Vagina (tissue), 2 donors: ENCODE measurements at regions of chr16 and their contacts with region 1.

Region 1: DNA sequence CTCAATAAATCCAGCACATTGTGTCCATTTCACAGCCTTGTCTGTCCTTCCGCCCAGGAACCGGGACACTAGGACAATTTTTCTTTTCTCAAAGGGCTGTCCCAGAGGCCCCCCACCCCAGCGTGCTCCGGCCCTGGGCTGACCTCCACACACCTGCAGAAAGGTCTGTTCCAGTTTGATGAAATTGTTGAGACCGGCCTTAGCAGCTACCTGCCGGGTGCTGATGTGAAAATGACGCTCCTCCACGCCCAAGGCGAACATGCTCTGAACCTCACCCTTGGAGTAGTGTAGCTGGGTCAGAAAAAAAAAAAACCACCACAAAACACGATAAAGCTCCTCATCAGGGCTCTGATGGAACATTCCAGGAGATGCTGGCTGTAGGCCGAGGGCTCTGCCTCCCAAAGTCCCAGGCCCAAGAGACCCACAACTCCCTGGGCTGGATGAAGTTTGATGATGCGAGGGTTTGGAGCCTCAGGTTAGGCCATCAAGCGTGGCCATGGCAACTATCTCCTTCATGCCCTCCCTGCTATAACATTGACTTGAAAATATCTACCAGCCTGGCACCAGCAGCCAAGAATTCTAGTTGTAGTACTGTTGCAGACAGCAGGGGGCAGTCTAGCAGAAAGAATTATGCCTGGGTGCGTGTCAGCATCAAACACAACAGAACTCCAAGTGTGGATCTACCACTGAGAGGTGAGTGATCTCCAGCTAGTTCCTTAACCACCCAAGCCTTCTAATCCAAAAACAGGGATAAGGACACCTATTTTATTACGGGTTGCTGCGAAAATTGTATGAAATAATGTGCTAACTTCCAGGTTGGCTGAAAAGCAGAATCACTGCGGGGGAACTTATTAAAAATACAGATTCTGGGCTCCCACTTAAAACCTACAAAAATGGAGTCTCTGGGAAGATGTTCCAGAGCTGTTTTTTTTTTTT is 62.1 kb downstream of the RMI2 start:
- DNase-seq: no peak
- H3K4me3 ChIP-seq: no peak overlapping the region
- H3K27ac ChIP-seq: no peak overlapping the region
- H3K4me1 ChIP-seq: peaks cover 16% of the 10 kb centered on the region
- H3K27me3 ChIP-seq: no peaks in the 10 kb centered on the region
- CTCF ChIP-seq: peak; percentile 38 to 87 (median 51)
- POLR2A ChIP-seq: no peak

Region 2: GRCh38 chr16:11649276-11649675 is 242.0 kb after region 1 on chr16:
- intact Hi-C with region 1: loop called (anchors 5 kb)
- DNase-seq: no peak
- H3K4me3 ChIP-seq: no peak overlapping the region
- H3K27ac ChIP-seq: no peak overlapping the region
- H3K4me1 ChIP-seq: no peaks in the 10 kb centered on the region
- H3K27me3 ChIP-seq: no peaks in the 10 kb centered on the region
- CTCF ChIP-seq: no peak
- POLR2A ChIP-seq: no peak

Region 3: DNA sequence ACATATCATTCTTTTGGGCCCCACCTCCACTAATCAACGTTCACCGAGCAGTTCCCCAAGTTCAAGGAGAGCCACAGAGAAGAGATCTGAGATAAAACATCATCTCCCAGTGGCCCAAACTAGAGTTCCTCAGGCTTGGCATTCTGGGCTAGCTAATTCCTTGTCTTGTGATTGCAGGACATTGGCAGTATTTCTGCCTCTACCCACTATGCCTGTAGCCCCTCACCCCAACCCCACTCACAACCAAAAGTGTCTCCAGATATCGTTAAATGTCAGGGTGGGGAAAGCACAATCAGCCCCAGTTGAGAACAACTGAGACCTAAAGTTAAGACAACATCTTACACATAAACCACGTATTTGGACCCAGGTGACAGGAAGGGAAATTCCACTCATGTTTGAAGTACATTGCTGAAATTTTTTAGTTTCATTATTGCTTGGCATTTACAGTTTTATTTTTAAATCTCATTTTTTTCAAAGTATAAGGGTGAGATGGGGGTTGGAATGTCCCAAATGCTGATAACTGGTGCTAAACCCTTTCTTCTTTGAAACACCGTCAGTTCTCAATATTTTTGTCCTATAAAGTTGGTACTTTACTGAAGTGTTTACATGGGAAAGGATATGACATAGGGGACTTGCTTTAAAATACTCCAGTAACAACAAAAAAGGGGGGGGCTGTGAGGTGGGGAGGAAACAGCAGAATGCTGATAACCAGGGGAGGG is 376.2 kb after region 1 on chr16:
- intact Hi-C with region 1: no loop called
- DNase-seq: no peak
- H3K4me3 ChIP-seq: peak overlapping the region; percentile 9 to 31
- H3K27ac ChIP-seq: peak overlapping the region; percentile 81
- H3K4me1 ChIP-seq: peaks cover 47% of the 10 kb centered on the region
- H3K27me3 ChIP-seq: no peaks in the 10 kb centered on the region
- CTCF ChIP-seq: no peak
- POLR2A ChIP-seq: no peak

Region 4: DNA sequence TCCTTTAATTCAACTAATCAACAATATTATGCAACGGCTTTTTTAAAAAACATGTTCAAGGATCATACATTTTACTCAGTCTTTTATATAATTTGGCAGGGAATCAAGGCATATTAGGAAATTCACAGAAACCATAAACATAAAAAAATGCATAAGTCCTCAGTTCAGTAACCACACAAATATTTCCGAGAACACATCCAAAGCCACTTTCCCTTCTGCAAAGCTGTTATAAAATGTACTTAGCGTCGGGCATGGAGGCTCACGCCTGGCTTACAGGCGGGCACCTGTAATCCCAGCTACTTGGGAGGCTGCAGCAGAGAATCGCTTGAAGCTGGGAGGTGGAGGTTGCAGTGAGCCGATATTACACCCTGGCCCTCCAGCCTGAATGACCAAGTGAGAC is 399.4 kb after region 1 on chr16:
- intact Hi-C with region 1: loop called (anchors 5 kb)
- DNase-seq: no peak
- H3K4me3 ChIP-seq: no peak overlapping the region
- H3K27ac ChIP-seq: no peak overlapping the region
- H3K4me1 ChIP-seq: no peaks in the 10 kb centered on the region
- H3K27me3 ChIP-seq: no peaks in the 10 kb centered on the region
- CTCF ChIP-seq: no peak
- POLR2A ChIP-seq: no peak